Colonic mucosa (tissue), 4 donors: ENCODE measurements at regions of chr11 and their contacts with region 1.

Region 1: GRCh38 chr11:61947486-61948210 is 2.5 kb upstream of the BEST1 start:
- DNase-seq: peak; percentile 86
- H3K4me3 ChIP-seq: no peak overlapping the region
- H3K27ac ChIP-seq: no peak overlapping the region
- H3K4me1 ChIP-seq: no peaks in the 10 kb centered on the region
- H3K27me3 ChIP-seq: no peaks in the 10 kb centered on the region
- CTCF ChIP-seq: peak; percentile 86

Region 2: DNA sequence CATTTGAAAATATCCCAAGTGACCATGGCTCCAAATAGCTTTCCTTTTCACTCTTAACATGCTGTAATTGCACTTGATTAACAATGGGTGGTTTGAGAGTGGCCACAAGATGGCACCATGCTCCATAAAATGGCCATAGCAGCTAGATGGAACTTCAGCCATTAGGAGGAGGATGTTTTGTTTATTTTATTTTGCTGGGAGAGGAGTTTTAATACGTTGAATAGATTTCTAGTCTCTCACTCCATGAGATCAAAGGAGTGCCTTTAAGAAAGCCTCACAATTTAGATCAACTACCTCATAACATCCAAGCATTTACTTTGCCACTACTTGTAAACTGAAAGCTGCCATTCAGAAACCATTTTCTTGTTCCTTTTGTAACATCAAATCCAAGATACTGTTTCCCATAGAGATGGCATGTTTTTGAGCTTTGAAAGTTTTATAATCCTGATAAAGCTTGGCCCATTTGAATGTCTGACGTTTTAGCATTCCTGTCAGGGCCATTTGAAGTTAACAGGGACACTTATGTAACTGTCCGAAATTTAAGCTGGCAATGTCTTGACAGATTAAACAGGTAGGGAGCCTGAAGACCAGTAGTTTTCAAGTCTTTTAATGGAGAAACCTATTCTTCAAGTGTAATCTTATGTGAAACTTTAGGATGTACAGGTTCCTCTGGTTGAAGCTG is 150.2 kb before region 1 on chr11:
- intact Hi-C with region 1: loop called (anchors 5 kb)
- DNase-seq: peak; percentile 82
- H3K4me3 ChIP-seq: no peak overlapping the region
- H3K27ac ChIP-seq: no peak overlapping the region
- H3K4me1 ChIP-seq: peaks cover 8% of the 10 kb centered on the region
- H3K27me3 ChIP-seq: no peaks in the 10 kb centered on the region
- CTCF ChIP-seq: peak; percentile 74

Region 3: DNA sequence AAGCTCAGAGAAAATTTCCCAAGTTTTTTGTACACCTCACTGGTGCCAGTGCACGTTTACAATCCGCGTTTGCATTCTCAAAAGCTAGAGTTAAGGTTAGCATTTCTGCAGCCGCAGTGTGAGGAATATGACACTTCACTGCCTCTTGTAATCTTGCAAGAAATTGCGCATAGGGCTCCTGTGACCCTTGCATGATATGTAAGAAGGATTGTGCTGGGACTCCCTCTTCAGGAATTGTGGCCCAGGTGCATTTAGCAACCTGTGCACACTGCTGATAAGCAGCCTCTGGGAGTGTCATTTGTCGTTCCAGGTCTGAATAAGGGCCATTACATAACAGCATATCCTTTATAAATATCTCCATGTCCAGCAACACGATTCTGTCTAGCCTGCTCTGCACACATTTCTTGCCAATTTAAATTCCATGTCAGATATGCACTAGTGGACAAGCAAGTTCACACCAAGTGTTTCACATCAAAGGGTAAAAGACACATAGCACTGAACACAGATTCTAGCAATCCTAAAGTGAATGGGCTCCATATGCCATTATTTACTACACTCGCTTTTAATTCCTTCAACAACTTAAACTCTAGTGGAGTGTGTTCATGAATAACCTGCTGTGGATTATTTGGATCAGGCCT is 107.0 kb after region 1 on chr11:
- intact Hi-C with region 1: loop called (anchors 5 kb)
- DNase-seq: peak; percentile 60
- H3K4me3 ChIP-seq: no peak overlapping the region
- H3K27ac ChIP-seq: no peak overlapping the region
- H3K4me1 ChIP-seq: no peaks in the 10 kb centered on the region
- H3K27me3 ChIP-seq: no peaks in the 10 kb centered on the region
- CTCF ChIP-seq: peak; percentile 42